Tibial artery (tissue), 4 donors: ENCODE measurements at regions of chr18 and their contacts with region 1.

Region 1: GRCh38 chr18:46481048-46481846 is 175.8 kb downstream of the LOXHD1 start:
- DNase-seq: no peak
- H3K4me3 ChIP-seq: no peak overlapping the region
- H3K27ac ChIP-seq: no peak overlapping the region
- H3K4me1 ChIP-seq: no peaks in the 10 kb centered on the region
- H3K27me3 ChIP-seq: peaks cover 0 to 16% of the 10 kb centered on the region in 2 donors
- CTCF ChIP-seq: peak; percentile 60 to 82

Region 2: GRCh38 chr18:45945669-45946068 is 535.6 kb before region 1 on chr18:
- intact Hi-C with region 1: no loop called
- DNase-seq: no peak
- H3K4me3 ChIP-seq: no peak overlapping the region
- H3K27ac ChIP-seq: no peak overlapping the region
- H3K4me1 ChIP-seq: no peaks in the 10 kb centered on the region
- H3K27me3 ChIP-seq: no peaks in the 10 kb centered on the region
- CTCF ChIP-seq: no peak

Region 3: DNA sequence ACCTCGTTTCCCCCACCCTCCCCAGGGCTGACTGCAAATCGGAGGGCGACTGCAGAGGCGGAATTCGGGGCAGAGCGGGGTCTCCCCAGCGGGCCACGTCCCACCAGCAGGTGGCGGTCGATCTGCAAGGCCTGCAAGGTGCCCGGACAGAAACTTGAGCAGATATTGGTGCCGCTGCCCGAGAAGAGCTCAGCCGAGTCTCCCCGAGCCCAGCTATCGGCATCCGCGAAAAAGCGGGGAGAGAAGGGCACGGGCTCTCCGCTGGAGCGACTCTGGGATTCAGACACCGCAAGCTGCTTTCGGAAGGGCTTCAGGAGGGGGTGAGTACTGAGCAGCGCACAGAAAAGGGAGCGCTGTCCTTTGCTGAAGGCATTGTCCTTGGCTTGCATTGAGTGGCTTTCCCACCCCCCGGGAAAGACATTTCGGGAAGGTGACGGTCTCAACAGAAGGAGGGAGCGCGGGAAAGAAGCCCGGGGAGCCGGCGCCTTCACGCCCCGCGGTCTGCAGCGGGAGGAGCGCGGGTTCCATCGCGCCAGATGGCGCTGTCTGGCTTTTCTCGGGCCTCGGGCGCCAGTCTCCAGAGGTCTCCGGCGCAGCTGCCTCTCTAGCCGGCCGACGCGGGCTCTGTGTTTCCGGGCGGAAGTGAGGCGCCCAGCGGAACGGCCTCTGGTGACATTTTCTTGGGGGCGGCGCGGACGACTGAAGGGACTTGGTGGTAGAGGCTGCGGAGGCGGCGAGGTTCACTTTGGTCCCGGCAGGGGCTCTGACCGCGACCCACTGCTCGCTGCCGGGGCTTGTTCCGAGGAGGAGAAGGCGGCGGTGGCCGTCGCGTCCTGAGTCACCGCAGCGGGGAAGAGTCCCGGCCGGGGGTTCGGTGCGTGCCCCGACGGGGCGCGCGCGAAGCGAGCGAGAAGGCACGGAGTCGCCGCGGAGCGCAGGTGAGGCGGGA is 307.6 kb before region 1 on chr18:
- intact Hi-C with region 1: loop called (anchors 10 kb)
- DNase-seq: peak; percentile 94 to 95
- H3K4me3 ChIP-seq: peak overlapping the region; percentile 95 to 100
- H3K27ac ChIP-seq: peak overlapping the region; percentile 90 to 92
- H3K4me1 ChIP-seq: peaks cover 0 to 38% (median 10%) of the 10 kb centered on the region in 4 donors
- H3K27me3 ChIP-seq: no peaks in the 10 kb centered on the region
- CTCF ChIP-seq: peak; percentile 64 to 68

Region 4: GRCh38 chr18:46281185-46282176 is 199.8 kb before region 1 on chr18:
- intact Hi-C with region 1: loop called (anchors 5 kb)
- DNase-seq: peak in 1 of 2 donors; percentile 36
- H3K4me3 ChIP-seq: no peak overlapping the region
- H3K27ac ChIP-seq: no peak overlapping the region
- H3K4me1 ChIP-seq: peaks cover 0 to 10% (median 0%) of the 10 kb centered on the region in 4 donors
- H3K27me3 ChIP-seq: no peaks in the 10 kb centered on the region
- CTCF ChIP-seq: peak; percentile 68 to 85